ENCODE measurements at regions of chr6 and their contacts with region 1.

Region 1: GRCh38 chr6:136582711-136583471 is 32.7 kb upstream of the MAP7 start:
- DNase-seq: no peak
- H3K4me3 ChIP-seq: no peak overlapping the region
- H3K27ac ChIP-seq: peak overlapping the region; percentile 80 to 86
- H3K4me1 ChIP-seq: peaks cover 6 to 56% (median 29%) of the 10 kb centered on the region in 4 donors
- H3K27me3 ChIP-seq: no peaks in the 10 kb centered on the region
- CTCF ChIP-seq: peak; percentile 60 to 82

Region 2: DNA sequence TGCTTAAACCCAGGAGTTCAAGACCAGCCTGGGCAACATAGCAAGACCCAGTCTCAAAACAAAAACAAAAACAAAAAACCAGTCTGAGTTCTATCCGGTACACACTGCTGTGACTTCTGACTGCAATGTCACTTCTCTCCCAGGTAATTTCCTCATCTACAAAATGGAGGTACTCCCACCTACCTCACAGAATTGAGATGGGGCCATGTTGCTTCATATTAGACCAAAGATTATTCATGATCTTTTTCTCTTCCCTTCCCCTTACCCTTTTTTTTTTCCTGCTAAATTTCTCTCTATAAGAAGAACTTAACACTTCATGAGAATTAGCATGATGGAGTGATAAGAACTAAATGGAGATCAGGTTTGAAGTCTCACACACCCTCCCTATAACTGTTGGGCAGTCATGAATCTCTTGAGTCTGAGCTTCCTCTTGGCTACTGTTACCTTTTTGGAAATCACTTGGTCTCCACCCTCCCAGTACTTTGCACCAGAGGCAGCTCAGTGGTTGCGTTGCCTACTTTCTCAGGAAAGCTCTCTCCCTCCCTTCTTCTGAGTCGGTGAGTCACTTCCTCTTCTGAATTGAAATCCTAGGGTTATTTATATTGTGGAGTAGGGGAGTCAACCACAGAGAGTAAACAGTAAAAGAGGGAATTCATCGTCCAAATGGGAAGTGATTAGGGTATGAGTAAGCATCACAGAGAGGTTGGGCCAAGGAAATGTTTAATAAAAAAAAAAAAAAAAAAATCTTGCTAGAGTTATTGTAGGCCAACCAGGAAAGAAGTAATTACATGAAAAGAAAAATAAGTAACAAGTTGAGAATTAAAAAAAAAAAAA is 27.2 kb after region 1 on chr6:
- intact Hi-C with region 1: loop called (anchors 1 kb)
- DNase-seq: peak; percentile 83 to 84
- H3K4me3 ChIP-seq: no peak overlapping the region
- H3K27ac ChIP-seq: peak overlapping the region; percentile 71 to 78
- H3K4me1 ChIP-seq: peaks cover 0 to 38% (median 21%) of the 10 kb centered on the region in 4 donors
- H3K27me3 ChIP-seq: no peaks in the 10 kb centered on the region
- CTCF ChIP-seq: no peak